Left cardiac atrium (tissue), 4 donors: ENCODE measurements at regions of chr3 and their contacts with region 1.

Region 1: DNA sequence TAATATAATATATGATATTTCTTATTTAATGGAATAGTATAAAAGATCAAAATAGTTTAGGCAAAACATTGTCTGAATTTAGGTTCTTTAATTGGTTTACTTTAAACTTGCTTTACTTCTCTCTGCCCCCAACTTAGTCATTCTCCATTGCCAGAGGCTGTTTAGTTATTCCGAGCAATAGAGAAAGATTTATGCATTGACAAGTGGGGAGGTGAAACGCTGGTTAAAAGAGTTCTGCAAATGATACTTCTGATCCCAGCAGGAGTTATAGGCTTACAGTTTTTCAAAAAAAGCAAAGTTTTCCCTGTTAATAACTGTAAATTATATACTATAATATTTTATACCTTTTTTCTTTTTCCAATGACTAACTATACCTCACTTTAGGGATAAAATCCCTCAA is 145.4 kb downstream of the EPHA3 start:
- DNase-seq: no peak
- ATAC-seq: no peak

Region 2: DNA sequence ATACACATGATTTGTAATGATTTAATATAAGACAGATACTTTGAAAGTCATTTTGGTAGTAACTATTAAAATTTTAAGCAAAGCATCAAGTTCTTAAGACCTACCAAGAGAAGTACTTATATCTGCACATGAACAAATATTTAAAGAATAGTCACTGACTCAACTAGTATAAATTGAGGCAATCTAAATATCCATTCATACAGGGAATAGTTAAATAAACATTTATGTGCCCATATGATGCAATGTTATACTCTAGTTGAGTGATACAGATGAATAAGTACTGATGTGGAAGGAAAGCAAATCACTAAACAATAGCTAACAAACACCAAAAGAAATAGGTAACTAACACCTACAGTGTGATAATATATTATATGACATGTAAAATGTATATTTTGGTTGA is 382.3 kb after region 1 on chr3:
- intact Hi-C with region 1: loop called in 1 of 2 experiments (anchors 10 kb)
- DNase-seq: no peak
- ATAC-seq: no peak